ENCODE measurements at regions of chr1 and their contacts with region 1.

Region 1: DNA sequence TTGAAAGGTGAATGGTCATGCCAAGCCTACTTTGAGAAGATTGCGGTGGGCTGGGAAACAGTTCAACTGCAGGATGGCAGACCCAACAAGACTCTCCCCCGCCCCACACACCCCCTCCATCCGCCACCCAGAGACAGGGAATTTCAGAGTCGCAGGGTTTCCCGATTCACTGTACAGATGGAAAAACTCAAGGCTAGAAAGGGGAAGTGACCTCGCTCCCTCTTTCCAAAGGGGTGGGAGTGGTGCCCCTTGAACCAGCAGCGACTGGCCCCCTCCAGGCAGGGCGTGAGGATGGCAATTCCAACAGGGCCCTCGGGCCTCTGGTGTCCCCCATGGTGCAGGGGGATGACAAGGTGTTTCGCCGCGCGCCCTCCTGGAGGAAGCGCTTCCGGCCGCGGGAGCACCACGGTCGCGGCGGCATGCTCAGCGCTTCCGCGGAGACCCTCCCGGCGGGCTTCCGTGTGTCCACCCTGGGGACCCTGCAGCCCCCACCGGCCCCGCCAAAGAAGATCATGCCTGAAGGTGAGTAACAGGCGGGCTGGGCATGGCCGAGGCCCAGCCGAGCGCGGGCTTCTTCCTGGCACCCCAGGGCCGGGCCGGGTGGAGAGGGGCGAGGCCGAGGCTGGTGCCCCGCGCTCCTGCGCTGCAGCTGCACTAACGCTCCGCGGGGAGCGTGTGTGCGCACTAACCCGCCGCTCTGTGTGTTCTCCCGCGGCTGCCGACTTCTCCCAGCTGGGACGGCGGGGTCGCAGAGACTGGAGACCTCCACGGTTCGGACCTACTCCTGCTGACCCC is 10.4 kb downstream of the MYOG start:
- H3K4me3 Mint-ChIP-seq: peak overlapping the region; percentile 69
- H3K27ac Mint-ChIP-seq: peak overlapping the region; percentile 52
- H3K4me1 Mint-ChIP-seq: peaks cover 42% of the 10 kb centered on the region
- H3K27me3 Mint-ChIP-seq: peaks cover 7% of the 10 kb centered on the region

Region 2: DNA sequence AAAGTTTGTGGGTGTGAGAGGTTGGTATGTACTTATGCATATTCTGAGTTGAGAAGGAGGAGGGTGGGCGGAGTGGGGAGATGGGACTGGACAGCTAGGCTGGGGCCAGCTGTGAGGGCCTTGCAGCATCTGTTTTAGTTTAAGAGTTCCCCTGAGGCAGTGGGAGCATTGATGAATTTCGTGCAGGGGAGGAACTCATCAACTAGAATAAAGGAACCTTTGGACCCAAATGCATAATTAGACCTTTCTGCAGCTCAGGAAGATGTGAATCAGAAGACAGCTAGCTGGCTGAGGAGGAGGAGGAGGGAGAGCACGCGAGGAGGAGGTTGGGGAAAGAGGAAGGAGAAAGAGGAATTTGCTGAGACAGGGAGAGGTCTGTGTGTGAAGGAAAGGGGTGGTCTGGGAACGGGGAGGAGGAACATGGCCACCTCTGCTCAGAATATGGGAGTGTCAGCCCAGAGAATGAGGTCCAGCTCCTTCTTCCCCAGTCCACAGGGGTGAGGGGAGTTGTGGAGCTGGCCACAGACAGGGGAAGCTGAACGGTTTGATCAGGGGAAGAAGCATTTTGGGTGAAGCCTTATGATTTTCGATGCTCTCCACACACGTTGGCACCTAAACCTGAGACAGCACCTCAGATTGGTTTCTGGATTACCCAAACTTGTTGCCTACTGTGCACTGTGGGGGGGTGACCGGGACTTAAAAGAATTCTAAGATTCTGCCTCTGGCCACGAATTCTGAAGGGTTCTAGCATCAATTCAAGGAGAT is 17.3 kb before region 1 on chr1:
- intact Hi-C with region 1: loop called (anchors 2 kb)
- H3K4me3 Mint-ChIP-seq: peak overlapping the region; percentile 39
- H3K27ac Mint-ChIP-seq: peak overlapping the region; percentile 21
- H3K4me1 Mint-ChIP-seq: peaks cover 74% of the 10 kb centered on the region
- H3K27me3 Mint-ChIP-seq: no peaks in the 10 kb centered on the region

Measured in dendritic cell treated with granulocyte-macrophage colony-stimulating factor and Interleukin-4, amounts not matched to agents 40 ng/mL and 50 ng/mL, for 4 days (primary cell).